ENCODE measurements at regions of chr19 and their contacts with region 1.

Region 1: DNA sequence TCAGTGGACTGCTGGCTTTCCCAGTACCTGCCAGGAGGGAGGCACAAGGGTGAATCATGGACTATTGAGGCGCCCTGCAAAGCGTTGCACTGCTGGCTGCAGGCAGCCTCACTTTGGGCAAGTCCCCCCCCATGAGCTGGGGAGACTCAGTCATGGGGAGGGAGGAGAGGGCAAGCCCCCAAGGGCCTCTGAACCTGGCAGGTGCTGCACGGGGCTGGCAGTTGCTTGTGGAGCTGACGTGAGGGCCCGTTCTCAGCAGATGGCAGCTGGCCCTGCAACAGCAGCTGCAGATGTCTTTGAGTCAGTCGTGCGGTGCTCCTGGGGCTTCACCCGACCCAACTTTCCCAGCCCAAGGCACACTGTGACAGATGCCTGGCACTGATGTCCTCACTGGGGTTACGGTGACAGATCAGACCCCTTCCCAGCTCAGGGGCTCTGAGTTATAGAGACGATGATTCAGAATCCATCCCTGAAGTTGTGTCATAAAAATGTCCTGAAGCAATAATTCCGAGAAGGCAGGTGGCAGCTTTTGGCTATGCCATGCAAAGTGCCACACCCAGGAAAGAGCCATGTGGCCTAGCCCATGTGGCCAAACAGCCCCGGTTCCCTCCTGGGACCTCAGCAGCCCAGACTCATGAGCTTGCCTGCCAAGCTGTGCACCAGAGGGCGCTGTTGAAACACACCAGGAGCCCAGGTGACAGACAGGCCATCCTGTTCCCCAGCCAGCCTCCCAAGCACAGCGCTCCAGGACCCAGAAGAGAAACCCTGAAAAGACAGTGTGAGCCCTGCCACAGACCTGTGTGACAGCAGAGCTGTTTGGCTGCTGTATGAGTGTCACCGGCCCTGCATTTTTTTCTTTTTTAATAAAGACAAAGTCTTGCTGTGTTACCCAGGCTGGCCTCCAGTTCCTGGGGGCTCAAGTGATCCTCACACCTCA is 53.6 kb upstream of the LDLR start:
- DNase-seq: peak; percentile 84 to 86
- ATAC-seq: peak; percentile 93 to 98
- H3K4me3 ChIP-seq: no peak overlapping the region
- H3K27ac ChIP-seq: 0 out of 6 replicates have a peak overlapping the region, but pooled peaks of 1 of the 2 experiments have one; percentile 5
- H3K4me1 ChIP-seq: 0 out of 3 replicates have a peak, but pooled peaks cover 4% of the 10 kb centered on the region
- CTCF ChIP-seq: peak; percentile 74
- EP300 ChIP-seq: no peak
- POLR2A ChIP-seq: no peak
- RAD21 ChIP-seq: peak; percentile 72 to 81

Region 2: GRCh38 chr19:11019824-11020223 is 15.9 kb before region 1 on chr19:
- CTCF ChIA-PET with region 1: interaction called, 17 read pairs
- POLR2A ChIA-PET with region 1: no interaction called
- DNase-seq: no peak
- ATAC-seq: no peak; a peak in 1 of 6 replicates
- H3K4me3 ChIP-seq: no peak overlapping the region
- H3K27ac ChIP-seq: no peak overlapping the region
- H3K4me1 ChIP-seq: no peaks in the 10 kb centered on the region
- CTCF ChIP-seq: no peak
- EP300 ChIP-seq: no peak
- POLR2A ChIP-seq: no peak
- RAD21 ChIP-seq: no peak

Region 3: GRCh38 chr19:11046605-11047354 is 11.1 kb after region 1 on chr19:
- CTCF ChIA-PET with region 1: interaction called, 22 read pairs
- POLR2A ChIA-PET with region 1: no interaction called
- DNase-seq: no peak
- ATAC-seq: no peak
- H3K4me3 ChIP-seq: no peak overlapping the region
- H3K27ac ChIP-seq: no peak overlapping the region
- H3K4me1 ChIP-seq: no peaks in the 10 kb centered on the region
- CTCF ChIP-seq: no peak
- EP300 ChIP-seq: no peak
- POLR2A ChIP-seq: no peak
- RAD21 ChIP-seq: no peak

Region 4: GRCh38 chr19:11053817-11054195 is 18.1 kb after region 1 on chr19:
- CTCF ChIA-PET with region 1: interaction called, 14 read pairs
- POLR2A ChIA-PET with region 1: no interaction called
- DNase-seq: no peak
- ATAC-seq: peak in 1 of 2 experiments; percentile 9; a peak in 1 of 6 replicates
- H3K4me3 ChIP-seq: no peak overlapping the region
- H3K27ac ChIP-seq: no peak overlapping the region
- H3K4me1 ChIP-seq: peaks cover 14% of the 10 kb centered on the region; the same call in 2 of the 3 replicates
- CTCF ChIP-seq: no peak
- EP300 ChIP-seq: no peak
- POLR2A ChIP-seq: no peak
- RAD21 ChIP-seq: no peak

Region 5: DNA sequence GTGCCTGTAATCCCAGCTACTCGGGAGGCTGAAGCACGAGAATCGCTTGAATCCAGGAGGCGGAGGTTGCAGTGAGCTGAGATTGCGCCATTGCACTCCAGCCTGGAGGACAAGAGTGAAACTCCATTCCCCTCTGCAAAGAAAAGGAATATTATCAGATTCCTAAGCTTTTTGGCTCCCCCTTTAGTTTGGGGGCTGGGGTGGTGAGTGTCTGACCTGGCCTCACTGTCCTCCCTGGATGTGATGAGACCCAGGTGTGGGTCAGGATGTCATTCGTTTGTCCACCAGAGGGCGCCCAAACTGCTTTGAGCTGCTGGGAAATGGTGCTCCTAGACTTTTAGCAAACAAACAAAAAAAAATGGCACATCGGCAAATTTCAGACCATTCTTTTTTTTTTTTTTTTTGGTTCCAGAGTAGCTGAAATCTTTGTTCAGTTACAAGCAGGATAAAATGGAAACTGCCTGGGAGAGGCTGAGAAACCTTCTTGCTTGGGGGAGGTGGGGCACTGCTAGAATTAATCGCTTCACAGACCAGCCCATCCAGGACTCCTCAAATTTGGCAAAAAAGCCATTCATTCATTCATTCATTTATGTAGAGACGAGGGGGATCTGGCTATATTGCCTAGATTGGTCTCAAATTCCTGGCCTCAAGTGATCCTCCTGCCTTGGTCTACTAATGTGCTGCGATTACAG is 90.4 kb after region 1 on chr19:
- CTCF ChIA-PET with region 1: interaction called, 17 read pairs
- POLR2A ChIA-PET with region 1: no interaction called
- DNase-seq: peak; percentile 38 to 78
- ATAC-seq: peak; percentile 80 to 87
- H3K4me3 ChIP-seq: no peak overlapping the region
- H3K27ac ChIP-seq: no peak overlapping the region
- H3K4me1 ChIP-seq: peaks cover 9% of the 10 kb centered on the region; the same call in 2 of the 3 replicates
- CTCF ChIP-seq: peak; percentile 63
- EP300 ChIP-seq: no peak
- POLR2A ChIP-seq: no peak
- RAD21 ChIP-seq: peak; percentile 54 to 58; a peak in 4 of 5 replicates

Measured in A549 (cell line).